ENCODE measurements at regions of chr5 and their contacts with region 1.

Region 1: DNA sequence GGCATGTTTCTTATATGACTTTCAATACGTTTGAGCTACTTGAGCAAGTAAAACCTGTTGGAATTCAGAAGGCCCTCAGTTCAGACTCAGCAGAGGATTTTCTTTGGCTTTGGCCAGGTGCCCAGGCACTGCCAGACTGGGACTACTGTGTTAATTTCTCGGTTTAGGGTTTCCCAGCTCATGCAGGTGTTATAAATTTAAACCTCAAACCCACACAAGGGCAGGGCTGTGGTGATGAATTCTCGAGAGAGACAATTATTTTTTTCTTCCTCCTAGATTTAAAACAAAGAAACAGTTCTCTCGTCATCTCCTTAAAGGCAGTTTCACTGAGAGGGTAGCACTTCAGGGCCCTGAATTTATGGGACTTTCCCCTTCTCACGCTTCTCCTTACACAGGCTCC is 406.0 kb upstream of the PIK3R1 start:
- DNase-seq: peak; percentile 83
- ATAC-seq: peak; percentile 82
- H3K4me3 ChIP-seq: no peak overlapping the region
- H3K27ac ChIP-seq: no peak overlapping the region
- H3K4me1 ChIP-seq: peaks cover 17% of the 10 kb centered on the region
- H3K27me3 ChIP-seq: no peaks in the 10 kb centered on the region
- CTCF ChIP-seq: no peak
- EP300 ChIP-seq: peak; percentile 68 to 73; a peak in 2 of 4 replicates
- POLR2A ChIP-seq: no peak
- RAD21 ChIP-seq: no peak

Region 2: DNA sequence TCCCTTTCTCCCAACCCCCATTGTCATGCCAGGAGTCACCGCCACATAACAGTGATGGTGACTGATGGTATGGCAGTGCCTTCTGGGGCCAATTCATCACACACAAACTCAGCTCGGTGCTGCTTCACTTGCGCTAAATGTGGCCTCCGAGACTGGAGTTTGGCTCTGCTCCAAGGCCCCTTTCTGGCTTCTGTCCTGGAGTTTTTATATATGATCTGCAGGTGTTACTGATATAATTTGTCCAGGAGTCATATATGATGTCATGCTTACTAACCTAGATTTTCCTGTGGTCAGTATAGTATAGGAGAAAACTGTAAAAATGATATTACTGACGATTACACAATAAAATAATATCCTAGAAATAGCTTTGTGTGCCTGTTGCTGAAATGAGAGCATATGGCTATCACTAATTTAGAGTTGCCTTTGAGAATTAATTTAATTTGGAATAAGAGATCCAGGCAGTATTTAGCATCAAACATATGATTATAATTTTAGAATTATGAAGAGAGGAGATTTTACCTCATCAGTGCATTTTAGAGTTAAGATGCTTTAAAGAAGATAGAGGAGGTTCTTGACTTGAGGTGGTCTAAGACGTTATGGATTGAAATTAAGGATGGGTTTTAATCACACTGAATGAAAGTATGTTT is 278.9 kb before region 1 on chr5:
- CTCF ChIA-PET with region 1: no interaction called
- POLR2A ChIA-PET with region 1: no interaction called
- RAD21 ChIA-PET with region 1: no interaction called
- SMC1A ChIA-PET with region 1: no interaction called
- in situ Hi-C with region 1: no loop called
- intact Hi-C with region 1: no loop called
- DNase-seq: no peak
- ATAC-seq: no peak
- H3K4me3 ChIP-seq: no peak overlapping the region
- H3K27ac ChIP-seq: no peak overlapping the region
- H3K4me1 ChIP-seq: no peaks in the 10 kb centered on the region
- H3K27me3 ChIP-seq: no peaks in the 10 kb centered on the region
- CTCF ChIP-seq: no peak
- EP300 ChIP-seq: no peak
- POLR2A ChIP-seq: no peak
- RAD21 ChIP-seq: no peak

Region 3: GRCh38 chr5:67774786-67775185 is 34.8 kb before region 1 on chr5:
- CTCF ChIA-PET with region 1: no interaction called
- POLR2A ChIA-PET with region 1: no interaction called
- RAD21 ChIA-PET with region 1: no interaction called
- SMC1A ChIA-PET with region 1: no interaction called
- in situ Hi-C with region 1: no loop called
- intact Hi-C with region 1: no loop called
- DNase-seq: no peak
- ATAC-seq: no peak
- H3K4me3 ChIP-seq: no peak overlapping the region
- H3K27ac ChIP-seq: no peak overlapping the region
- H3K4me1 ChIP-seq: no peaks in the 10 kb centered on the region
- H3K27me3 ChIP-seq: no peaks in the 10 kb centered on the region
- CTCF ChIP-seq: no peak
- EP300 ChIP-seq: no peak
- POLR2A ChIP-seq: no peak
- RAD21 ChIP-seq: no peak

Region 4: DNA sequence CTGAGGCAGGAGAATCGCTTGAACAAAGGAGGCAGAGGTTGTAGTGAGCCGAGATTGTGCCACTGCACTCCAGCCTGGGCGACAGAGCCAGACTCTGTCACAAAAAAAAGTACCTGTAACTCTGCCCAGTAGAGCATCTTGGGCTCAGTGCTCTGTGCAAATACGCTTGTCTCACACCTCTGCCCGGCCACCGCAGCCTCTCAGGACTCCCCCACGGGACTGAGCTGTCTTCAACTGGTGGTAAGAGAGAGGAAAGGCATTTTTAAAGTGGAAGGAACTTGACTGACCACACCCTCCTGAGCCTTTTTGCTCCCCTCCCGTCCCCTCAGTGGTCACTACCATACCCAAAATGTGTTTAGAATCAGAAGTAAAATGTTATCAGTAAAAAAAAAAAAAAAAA is 231.7 kb after region 1 on chr5:
- CTCF ChIA-PET with region 1: no interaction called
- POLR2A ChIA-PET with region 1: no interaction called
- RAD21 ChIA-PET with region 1: no interaction called
- SMC1A ChIA-PET with region 1: no interaction called
- in situ Hi-C with region 1: no loop called
- intact Hi-C with region 1: loop called (anchors 1 kb)
- DNase-seq: peak; percentile 56
- ATAC-seq: peak; percentile 98
- H3K4me3 ChIP-seq: no peak overlapping the region
- H3K27ac ChIP-seq: no peak overlapping the region
- H3K4me1 ChIP-seq: peaks cover 19% of the 10 kb centered on the region
- H3K27me3 ChIP-seq: no peaks in the 10 kb centered on the region
- CTCF ChIP-seq: no peak
- EP300 ChIP-seq: peak in 1 of 2 experiments; percentile 24; a peak in 1 of 4 replicates
- POLR2A ChIP-seq: no peak
- RAD21 ChIP-seq: no peak

Region 5: DNA sequence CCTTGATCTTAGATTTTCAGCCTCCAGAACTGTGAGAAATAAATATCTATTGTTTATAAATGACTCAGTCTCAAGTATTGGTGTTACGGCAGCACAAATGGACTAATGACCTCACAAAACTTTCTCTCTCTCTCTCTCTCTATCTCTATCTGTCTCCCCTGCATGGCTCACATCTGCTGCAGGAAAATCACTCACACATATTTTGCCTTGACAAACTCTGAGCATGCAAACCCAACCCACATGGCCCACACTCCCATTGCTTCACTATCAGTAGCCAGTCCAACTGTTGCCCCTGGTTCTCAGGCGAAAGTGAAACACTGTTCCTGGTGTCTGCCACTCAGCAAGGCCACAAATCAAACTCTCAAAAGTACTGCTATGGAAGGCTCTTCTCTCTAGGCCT is 339.6 kb after region 1 on chr5:
- CTCF ChIA-PET with region 1: no interaction called
- POLR2A ChIA-PET with region 1: no interaction called
- RAD21 ChIA-PET with region 1: no interaction called
- SMC1A ChIA-PET with region 1: no interaction called
- in situ Hi-C with region 1: no loop called
- intact Hi-C with region 1: loop called (anchors 5 kb)
- DNase-seq: no peak
- ATAC-seq: peak; percentile 65
- H3K4me3 ChIP-seq: no peak overlapping the region
- H3K27ac ChIP-seq: no peak overlapping the region
- H3K4me1 ChIP-seq: peaks cover 15% of the 10 kb centered on the region
- H3K27me3 ChIP-seq: no peaks in the 10 kb centered on the region
- CTCF ChIP-seq: no peak
- EP300 ChIP-seq: no peak
- POLR2A ChIP-seq: no peak
- RAD21 ChIP-seq: no peak

Measured in GM12878 (cell line).